Dendritic cell treated with granulocyte-macrophage colony-stimulating factor and Interleukin-4, amounts not matched to agents 40 ng/mL and 50 ng/mL, for 4 days (primary cell): ENCODE measurements at regions of chr2 and their contacts with region 1.

Region 1: DNA sequence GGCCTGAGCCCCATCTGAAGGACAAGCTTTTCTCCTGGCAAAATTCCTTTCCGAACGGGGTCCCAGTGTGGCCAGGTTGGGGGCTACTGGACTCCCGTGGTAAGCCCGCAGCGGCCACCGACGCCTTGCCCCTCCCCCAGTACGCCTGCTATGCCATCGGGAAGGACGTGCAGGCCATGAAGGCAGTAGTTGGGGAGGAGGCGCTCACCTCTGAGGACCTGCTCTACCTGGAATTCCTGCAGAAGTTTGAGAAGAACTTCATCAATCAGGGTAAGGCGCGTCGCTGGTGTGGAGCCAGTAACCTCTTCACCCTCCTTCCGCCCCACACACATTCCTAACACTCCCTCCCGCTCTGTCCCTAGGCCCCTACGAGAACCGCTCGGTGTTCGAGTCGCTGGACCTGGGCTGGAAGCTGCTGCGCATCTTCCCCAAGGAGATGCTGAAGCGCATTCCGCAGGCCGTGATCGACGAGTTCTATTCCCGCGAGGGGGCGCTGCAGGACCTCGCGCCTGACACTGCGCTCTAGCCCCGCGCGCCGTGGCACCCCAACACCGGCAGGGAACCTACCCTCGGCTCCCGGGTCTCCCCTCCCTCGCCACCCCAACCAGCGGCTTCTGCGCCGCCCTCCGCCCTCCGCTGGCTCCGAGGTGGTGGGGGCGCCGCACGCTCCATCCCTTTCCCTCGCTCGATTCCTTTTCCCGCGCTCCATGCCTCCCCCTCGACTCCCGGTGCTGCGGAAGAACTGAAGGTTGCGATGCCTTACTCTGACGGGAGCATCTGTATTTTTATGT is 13.6 kb upstream of the ANKRD53 start:
- H3K4me3 Mint-ChIP-seq: peak overlapping the region; percentile 72
- H3K27ac Mint-ChIP-seq: no peak overlapping the region
- H3K4me1 Mint-ChIP-seq: peaks cover 8% of the 10 kb centered on the region
- H3K27me3 Mint-ChIP-seq: peaks cover 62% of the 10 kb centered on the region

Region 2: DNA sequence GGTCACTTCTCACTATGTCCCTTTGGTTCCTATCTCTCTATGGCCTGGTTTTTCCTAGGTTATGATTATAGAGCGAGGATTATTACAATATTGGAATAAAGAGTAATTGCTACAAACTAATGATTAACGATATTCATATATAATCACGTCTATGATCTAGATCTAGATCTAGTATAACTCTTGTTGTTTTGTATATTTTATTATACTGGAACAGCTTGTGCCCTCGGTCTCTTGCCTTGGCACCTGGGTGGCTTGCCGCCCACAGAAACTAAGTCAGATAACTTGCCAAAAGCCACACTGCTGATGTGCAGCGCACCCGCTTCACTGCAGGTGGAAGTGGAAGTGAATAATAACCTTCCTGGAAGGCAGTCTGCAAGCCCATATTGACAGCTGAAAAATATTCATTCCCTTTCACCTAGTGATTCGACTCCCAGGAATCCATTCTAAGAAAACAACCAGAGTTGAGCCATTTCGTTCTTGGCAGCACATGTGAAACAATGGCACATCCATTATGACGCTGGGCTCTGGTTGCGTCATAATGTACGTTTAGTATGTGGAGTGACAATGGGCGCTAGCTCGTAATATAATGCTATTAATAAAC is 12.9 kb after region 1 on chr2:
- intact Hi-C with region 1: loop called (anchors 1 kb)
- H3K4me3 Mint-ChIP-seq: peak overlapping the region; percentile 84
- H3K27ac Mint-ChIP-seq: peak overlapping the region; percentile 77
- H3K4me1 Mint-ChIP-seq: peaks cover 17% of the 10 kb centered on the region
- H3K27me3 Mint-ChIP-seq: peaks cover 29% of the 10 kb centered on the region

Region 3: DNA sequence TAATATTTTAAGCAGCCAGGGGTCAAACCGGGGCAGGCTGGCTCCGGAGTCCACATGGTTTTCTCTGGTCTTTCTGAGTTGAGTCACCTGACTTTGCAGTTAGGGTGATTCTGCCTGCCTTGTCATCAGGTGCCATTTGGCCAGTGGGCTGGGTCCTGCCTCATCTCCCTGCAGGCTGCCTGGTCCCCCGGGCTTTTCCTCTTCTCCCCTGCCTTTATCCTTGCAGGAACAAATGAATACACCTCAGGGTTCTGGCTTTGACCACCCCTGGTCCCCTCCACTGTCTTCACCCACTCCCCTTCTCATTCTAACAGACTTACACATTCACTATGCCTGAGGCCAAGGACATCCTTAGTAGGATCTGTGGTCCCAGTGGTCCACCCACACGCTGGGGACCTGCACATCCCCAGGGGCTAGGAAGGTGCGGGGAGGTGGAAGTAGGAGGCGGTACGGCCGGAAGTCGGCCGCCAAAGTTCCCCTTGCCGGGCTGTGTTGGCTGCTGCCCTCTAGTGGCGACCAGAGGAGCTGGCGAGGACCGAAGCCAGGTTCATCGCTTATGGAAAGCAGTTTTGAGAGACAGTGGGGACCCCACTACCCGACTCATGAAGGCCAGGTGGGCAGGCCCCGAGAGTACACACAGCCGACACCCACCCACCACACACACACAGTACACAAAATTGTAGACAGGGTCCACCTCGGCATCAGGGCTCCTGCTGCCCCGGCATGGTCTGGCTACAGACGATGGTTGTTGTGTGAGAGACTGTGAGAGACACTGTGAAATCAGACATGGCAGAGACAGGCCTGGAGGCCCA is 36.2 kb after region 1 on chr2:
- intact Hi-C with region 1: loop called (anchors 1 kb)
- H3K4me3 Mint-ChIP-seq: no peak overlapping the region
- H3K27ac Mint-ChIP-seq: no peak overlapping the region
- H3K4me1 Mint-ChIP-seq: peaks cover 14% of the 10 kb centered on the region
- H3K27me3 Mint-ChIP-seq: peaks cover 3% of the 10 kb centered on the region

Region 4: DNA sequence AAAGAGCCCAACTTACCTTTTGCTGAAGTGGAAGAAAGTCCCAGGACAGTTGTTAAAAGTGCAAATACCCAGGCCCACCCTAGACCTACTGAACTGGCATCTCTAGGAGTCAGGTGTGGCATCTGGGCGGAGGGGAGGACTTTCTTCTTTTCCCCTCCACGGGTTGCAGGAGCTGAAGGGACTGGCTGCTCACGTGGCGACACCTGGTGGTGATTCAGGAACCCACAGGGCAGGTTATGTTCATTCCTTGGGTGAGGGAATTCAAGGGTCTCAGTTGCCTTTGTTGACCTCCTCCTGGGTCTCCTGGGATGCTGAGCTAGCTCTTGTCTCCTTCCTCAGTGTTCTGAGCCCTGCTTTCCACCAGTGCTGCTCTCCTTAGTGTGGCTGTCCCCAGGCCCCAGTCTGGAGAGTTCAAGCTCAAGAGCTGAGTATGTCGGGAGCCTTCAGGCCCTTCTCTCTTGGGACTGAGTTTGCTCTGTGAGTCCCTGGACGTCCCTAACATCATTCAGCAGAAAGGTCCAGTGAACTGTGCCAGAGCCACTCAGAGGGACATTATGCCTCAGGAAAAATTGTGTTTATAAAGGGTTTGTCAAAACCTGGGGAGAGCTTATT is 545.5 kb after region 1 on chr2:
- intact Hi-C with region 1: no loop called
- H3K4me3 Mint-ChIP-seq: no peak overlapping the region
- H3K27ac Mint-ChIP-seq: peak overlapping the region; percentile 10
- H3K4me1 Mint-ChIP-seq: no peaks in the 10 kb centered on the region
- H3K27me3 Mint-ChIP-seq: no peaks in the 10 kb centered on the region

Region 5: GRCh38 chr2:71778514-71778913 is 813.7 kb after region 1 on chr2:
- intact Hi-C with region 1: no loop called
- H3K4me3 Mint-ChIP-seq: no peak overlapping the region
- H3K27ac Mint-ChIP-seq: no peak overlapping the region
- H3K4me1 Mint-ChIP-seq: no peaks in the 10 kb centered on the region
- H3K27me3 Mint-ChIP-seq: peaks cover 2% of the 10 kb centered on the region